ENCODE measurements at regions of chr6 and their contacts with region 1.

Region 1: DNA sequence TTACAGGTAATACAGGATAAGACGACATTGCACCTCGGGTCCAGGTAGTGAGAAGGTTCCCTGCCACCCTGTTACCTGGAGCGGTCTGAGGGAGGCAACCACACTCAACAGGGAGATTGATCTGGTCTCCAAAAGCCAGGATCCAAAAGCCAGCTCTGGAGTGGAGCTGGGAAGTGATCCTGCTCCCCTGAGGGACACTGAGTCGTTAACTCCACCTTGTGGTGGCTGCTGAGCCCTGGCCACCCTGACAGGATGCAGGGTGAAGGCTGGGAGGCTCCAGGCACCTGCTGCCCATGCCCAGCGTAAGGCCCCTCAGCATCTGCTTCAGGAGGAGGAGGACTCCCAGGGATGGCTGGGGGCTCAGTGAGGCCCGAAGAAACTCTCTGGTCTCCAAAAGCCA is 38.7 kb upstream of the SLC22A2 start:
- DNase-seq: no peak
- ATAC-seq: peak; percentile 36 to 59 (median 55)
- H3K4me3 ChIP-seq: no peak overlapping the region
- H3K27ac ChIP-seq: no peak overlapping the region
- H3K4me1 ChIP-seq: peaks cover 11% of the 10 kb centered on the region
- H3K27me3 ChIP-seq: no peaks in the 10 kb centered on the region
- CTCF ChIP-seq: peak; percentile 21

Region 2: DNA sequence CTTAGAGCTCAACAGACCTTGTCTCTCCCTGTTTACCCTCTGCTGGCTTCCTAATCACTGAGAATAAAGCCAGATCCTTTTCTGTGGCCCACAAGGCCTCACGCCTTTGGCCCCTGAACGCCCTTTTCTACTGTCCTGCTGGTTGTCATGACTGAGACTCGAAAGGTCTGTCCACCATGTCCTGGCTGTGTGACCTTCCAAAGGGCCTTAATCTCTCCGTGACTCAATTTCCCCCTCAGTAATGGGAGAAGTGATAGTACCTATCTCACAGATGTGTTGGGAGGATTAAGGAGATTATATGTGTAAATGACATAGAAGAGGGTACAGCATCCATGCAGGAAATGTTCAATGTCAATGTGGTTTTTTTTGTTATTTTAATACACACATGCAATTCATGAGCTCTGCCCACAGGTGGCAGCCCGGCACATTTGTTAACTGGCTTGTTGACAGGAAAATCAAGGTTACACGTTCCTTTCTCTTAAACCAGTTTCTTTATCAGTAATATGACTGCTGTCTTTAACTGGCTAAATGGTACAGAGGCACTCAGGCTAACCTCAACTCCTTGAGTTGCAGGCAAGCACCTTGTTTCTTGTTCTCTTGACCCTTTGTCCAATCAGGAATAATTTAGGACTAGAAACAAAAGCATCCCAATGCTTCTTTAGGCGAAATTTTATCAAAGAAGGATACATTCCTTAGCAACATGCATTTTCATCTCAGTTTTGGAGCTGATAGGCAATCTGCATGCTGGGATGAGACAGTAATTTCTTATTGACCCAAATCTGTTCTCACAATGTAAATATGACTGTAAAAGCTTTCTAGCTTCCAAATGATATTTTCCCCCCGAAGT is 159.1 kb before region 1 on chr6:
- intact Hi-C with region 1: loop called in 1 of 2 experiments (anchors 5 kb)
- DNase-seq: no peak
- ATAC-seq: peak; percentile 59 to 83 (median 66)
- H3K4me3 ChIP-seq: no peak overlapping the region
- H3K27ac ChIP-seq: no peak overlapping the region
- H3K4me1 ChIP-seq: no peaks in the 10 kb centered on the region
- H3K27me3 ChIP-seq: no peaks in the 10 kb centered on the region
- CTCF ChIP-seq: peak; percentile 71

Region 3: DNA sequence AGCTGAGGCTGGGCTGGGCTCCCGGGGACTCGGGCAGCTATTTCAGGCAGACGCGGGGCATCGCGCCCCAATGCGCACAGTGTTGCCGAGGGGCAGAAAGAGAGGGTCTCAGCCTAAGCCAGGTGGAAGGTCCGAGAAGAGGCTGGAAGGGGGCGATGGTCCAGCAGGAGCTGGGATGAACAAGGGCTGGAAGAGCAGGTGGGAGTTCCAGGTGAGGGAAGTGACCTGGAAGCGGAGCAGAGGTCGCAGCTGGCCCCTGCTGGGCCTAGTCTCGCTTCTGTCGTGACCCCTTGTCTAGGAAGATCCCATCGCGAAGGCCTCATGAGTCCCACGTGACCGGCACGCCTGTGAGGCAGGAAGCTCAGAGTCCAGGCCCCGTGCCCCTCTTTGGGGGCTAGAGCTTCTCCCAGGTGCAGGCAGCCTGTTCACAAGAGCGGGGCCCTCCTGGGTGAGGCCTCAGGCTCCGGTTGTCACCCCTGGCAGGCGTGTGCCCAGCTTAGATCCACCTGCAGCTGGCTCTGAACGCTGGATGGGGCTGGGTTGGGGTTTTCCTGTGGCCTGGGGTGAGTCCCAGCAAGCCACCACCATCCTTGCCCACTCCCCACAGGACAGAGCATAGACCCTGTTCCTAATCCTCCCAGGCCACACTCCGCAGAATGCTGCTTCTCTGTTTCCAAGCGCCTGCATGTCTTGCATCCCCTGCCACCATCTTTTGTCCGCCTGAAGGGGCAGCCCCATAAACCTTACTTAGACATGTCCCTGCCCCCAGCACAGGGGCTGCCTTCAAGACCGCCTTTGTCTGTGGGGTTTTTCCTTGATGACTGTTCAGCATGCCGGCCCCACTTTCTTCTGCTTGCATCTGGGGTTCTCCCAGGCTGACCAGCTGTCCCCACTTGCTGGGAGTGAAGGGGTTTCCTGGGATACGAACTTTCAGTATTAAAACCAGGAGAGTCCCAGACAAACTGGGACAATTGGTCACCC is 66.0 kb after region 1 on chr6:
- intact Hi-C with region 1: no loop called
- DNase-seq: no peak
- ATAC-seq: no peak
- H3K4me3 ChIP-seq: no peak overlapping the region
- H3K27ac ChIP-seq: no peak overlapping the region
- H3K4me1 ChIP-seq: peaks cover 4% of the 10 kb centered on the region
- H3K27me3 ChIP-seq: no peaks in the 10 kb centered on the region
- CTCF ChIP-seq: no peak

Measured in psoas muscle (tissue), 8 donors.